Uterus (tissue), 4 donors: ENCODE measurements at regions of chr15 and their contacts with region 1.

Region 1: GRCh38 chr15:56491110-56491722 is 26.3 kb upstream of the MNS1 start:
- DNase-seq: peak; percentile 62 to 63
- H3K4me3 ChIP-seq: no peak overlapping the region
- H3K27ac ChIP-seq: no peak overlapping the region
- H3K4me1 ChIP-seq: no peaks in the 10 kb centered on the region
- H3K27me3 ChIP-seq: no peaks in the 10 kb centered on the region
- CTCF ChIP-seq: peak; percentile 68 to 82 (median 68)
- POLR2A ChIP-seq: no peak

Region 2: DNA sequence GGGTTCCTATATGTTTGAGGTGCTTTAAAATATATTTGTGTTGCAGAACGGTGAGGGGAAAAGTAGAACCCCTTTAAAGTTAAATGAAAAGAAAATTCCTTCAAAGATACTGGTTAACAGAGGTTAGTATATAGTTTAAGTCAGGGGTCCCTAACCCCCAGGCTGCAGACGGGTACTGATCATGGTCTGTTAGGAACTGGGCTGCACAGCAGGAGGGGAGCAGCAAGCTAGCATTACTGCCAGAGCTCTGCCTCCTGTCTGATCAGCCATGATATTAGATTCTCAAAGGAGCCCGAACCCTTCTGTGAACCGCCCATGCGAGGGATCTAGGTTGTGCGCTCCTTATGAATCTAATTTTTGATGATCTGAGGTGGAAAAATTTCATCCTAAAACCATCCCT is 210.1 kb before region 1 on chr15:
- intact Hi-C with region 1: no loop called
- DNase-seq: no peak
- H3K4me3 ChIP-seq: no peak overlapping the region
- H3K27ac ChIP-seq: no peak overlapping the region
- H3K4me1 ChIP-seq: no peaks in the 10 kb centered on the region
- H3K27me3 ChIP-seq: no peaks in the 10 kb centered on the region
- CTCF ChIP-seq: no peak
- POLR2A ChIP-seq: no peak

Region 3: DNA sequence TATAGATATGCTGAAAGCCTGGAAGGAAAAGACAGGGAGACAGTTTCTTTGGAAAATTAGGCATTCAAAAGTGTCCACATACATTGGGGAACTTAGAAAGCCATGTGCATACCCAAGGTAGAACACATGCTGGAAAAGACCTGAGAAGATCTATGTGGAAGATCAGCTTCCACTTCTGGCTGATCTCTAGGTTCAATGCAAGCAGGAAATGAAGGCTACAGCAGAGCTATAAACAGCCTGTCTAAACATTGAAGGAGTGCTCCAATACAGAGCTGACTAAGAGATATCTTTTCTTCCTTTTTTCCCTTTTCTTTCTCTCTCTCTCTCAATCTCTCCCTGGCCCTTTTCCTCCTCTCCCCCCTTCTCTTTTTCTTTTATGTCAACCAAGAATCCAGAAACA is 353.7 kb after region 1 on chr15:
- intact Hi-C with region 1: no loop called
- DNase-seq: no peak
- H3K4me3 ChIP-seq: no peak overlapping the region
- H3K27ac ChIP-seq: no peak overlapping the region
- H3K4me1 ChIP-seq: no peaks in the 10 kb centered on the region
- H3K27me3 ChIP-seq: no peaks in the 10 kb centered on the region
- CTCF ChIP-seq: no peak
- POLR2A ChIP-seq: no peak

Region 4: DNA sequence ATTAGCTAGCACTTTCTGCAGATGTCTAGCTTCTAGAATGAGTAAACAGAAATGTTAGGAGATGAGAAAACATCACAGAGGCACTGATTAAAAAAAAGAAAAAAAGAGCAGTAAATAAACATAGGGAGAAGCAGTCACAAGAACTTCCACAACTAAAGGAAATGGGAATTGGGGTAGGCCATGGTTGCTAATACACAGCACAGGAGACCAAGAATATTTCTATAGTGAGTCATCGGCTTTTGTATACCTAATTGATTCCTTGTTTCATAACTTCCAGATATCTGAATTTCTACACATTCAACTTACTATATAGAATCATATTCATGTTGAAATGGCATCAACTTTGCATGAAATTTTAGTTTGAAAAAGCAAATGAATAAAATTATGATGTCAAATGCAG is 380.0 kb after region 1 on chr15:
- intact Hi-C with region 1: loop called (anchors 10 kb)
- DNase-seq: no peak
- H3K4me3 ChIP-seq: no peak overlapping the region
- H3K27ac ChIP-seq: no peak overlapping the region
- H3K4me1 ChIP-seq: no peaks in the 10 kb centered on the region
- H3K27me3 ChIP-seq: no peaks in the 10 kb centered on the region
- CTCF ChIP-seq: no peak
- POLR2A ChIP-seq: no peak

Region 5: GRCh38 chr15:56894601-56895000 is 403.4 kb after region 1 on chr15:
- intact Hi-C with region 1: no loop called
- DNase-seq: no peak
- H3K4me3 ChIP-seq: no peak overlapping the region
- H3K27ac ChIP-seq: no peak overlapping the region
- H3K4me1 ChIP-seq: no peaks in the 10 kb centered on the region
- H3K27me3 ChIP-seq: no peaks in the 10 kb centered on the region
- CTCF ChIP-seq: no peak
- POLR2A ChIP-seq: no peak

Region 6: GRCh38 chr15:57527382-57528091 is 1036.3 kb after region 1 on chr15:
- intact Hi-C with region 1: loop called (anchors 10 kb)
- DNase-seq: peak in 1 of 2 donors; percentile 69
- H3K4me3 ChIP-seq: no peak overlapping the region
- H3K27ac ChIP-seq: no peak overlapping the region
- H3K4me1 ChIP-seq: peaks cover 0 to 7% of the 10 kb centered on the region in 2 donors
- H3K27me3 ChIP-seq: no peaks in the 10 kb centered on the region
- CTCF ChIP-seq: peak; percentile 63 to 87 (median 78)
- POLR2A ChIP-seq: no peak